ENCODE measurements at regions of chr6 and their contacts with region 1.

Region 1: GRCh38 chr6:53139841-53140413 is 8.7 kb downstream of the GCM1 start:
- DNase-seq: no peak
- H3K4me3 ChIP-seq: no peak overlapping the region
- H3K27ac ChIP-seq: no peak overlapping the region
- H3K4me1 ChIP-seq: no peaks in the 10 kb centered on the region
- H3K27me3 ChIP-seq: no peaks in the 10 kb centered on the region
- CTCF ChIP-seq: no peak
- EP300 ChIP-seq: no peak
- POLR2A ChIP-seq: no peak
- RAD21 ChIP-seq: no peak

Region 2: DNA sequence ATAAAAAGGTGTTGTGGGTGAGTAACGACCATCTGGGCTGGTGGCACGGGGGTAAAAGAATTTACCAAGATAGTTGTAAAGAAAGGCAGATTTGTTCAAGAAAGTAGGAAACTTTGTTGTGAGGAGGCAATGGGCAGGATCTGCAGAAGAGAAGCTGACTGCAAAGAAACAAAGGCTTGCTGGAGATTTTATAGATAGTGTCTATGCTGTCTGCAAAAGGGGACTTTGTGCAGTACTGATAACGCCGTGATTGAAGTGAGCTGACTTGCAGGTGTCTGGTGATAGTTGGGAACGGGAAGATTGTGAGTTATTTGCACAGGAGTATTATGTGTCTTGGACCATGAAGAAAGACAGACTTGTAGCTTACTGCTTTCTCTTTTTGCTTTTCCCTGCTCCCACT is 193.6 kb before region 1 on chr6:
- CTCF ChIA-PET with region 1: no interaction called
- POLR2A ChIA-PET with region 1: no interaction called
- DNase-seq: no peak
- H3K4me3 ChIP-seq: no peak overlapping the region
- H3K27ac ChIP-seq: no peak overlapping the region
- H3K4me1 ChIP-seq: 0 out of 7 replicates have a peak, but pooled peaks cover 0 to 5% (median 0%) of the 10 kb centered on the region in 4 experiments
- H3K27me3 ChIP-seq: no peaks in the 10 kb centered on the region
- CTCF ChIP-seq: no peak
- EP300 ChIP-seq: no peak
- POLR2A ChIP-seq: no peak
- RAD21 ChIP-seq: no peak

Region 3: GRCh38 chr6:53112404-53112803 is 27.5 kb before region 1 on chr6:
- CTCF ChIA-PET with region 1: no interaction called
- POLR2A ChIA-PET with region 1: no interaction called
- DNase-seq: no peak
- H3K4me3 ChIP-seq: no peak overlapping the region
- H3K27ac ChIP-seq: no peak overlapping the region
- H3K4me1 ChIP-seq: no peaks in the 10 kb centered on the region
- H3K27me3 ChIP-seq: no peaks in the 10 kb centered on the region
- CTCF ChIP-seq: no peak
- EP300 ChIP-seq: no peak
- POLR2A ChIP-seq: no peak
- RAD21 ChIP-seq: no peak

Region 4: GRCh38 chr6:53151676-53152075 is 11.7 kb after region 1 on chr6:
- CTCF ChIA-PET with region 1: interaction called, 22 read pairs
- POLR2A ChIA-PET with region 1: no interaction called
- DNase-seq: peak; percentile 15 to 65
- H3K4me3 ChIP-seq: no peak overlapping the region
- H3K27ac ChIP-seq: no peak overlapping the region
- H3K4me1 ChIP-seq: no peaks in the 10 kb centered on the region
- H3K27me3 ChIP-seq: no peaks in the 10 kb centered on the region
- CTCF ChIP-seq: peak; percentile 73 to 88 (median 77)
- EP300 ChIP-seq: no peak
- POLR2A ChIP-seq: no peak
- RAD21 ChIP-seq: peak; percentile 62 to 73

Measured in H1 (cell line).